Transverse colon (tissue), 4 donors: ENCODE measurements at regions of chr2 and their contacts with region 1.

Region 1: GRCh38 chr2:109128048-109128465 is 948 bp upstream of the SH3RF3 start:
- DNase-seq: peak; percentile 67
- H3K4me3 ChIP-seq: peak overlapping the region; percentile 51 to 66 (median 58)
- H3K27ac ChIP-seq: peak overlapping the region; percentile 75 to 86 (median 78)
- H3K4me1 ChIP-seq: peaks cover 0 to 19% (median 9%) of the 10 kb centered on the region in 4 donors
- H3K27me3 ChIP-seq: peaks cover 26% of the 10 kb centered on the region
- CTCF ChIP-seq: peak; percentile 79 to 88 (median 81)
- EP300 ChIP-seq: no peak
- POLR2A ChIP-seq: peak; percentile 18

Region 2: GRCh38 chr2:109510136-109511028 is 382.3 kb after region 1 on chr2:
- in situ Hi-C with region 1: loop called in 3 of 4 experiments (anchors 10 kb)
- intact Hi-C with region 1: loop called (anchors 2 kb)
- DNase-seq: peak; percentile 84
- H3K4me3 ChIP-seq: no peak overlapping the region
- H3K27ac ChIP-seq: no peak overlapping the region
- H3K4me1 ChIP-seq: peaks cover 6 to 14% (median 8%) of the 10 kb centered on the region in 4 donors
- H3K27me3 ChIP-seq: no peaks in the 10 kb centered on the region
- CTCF ChIP-seq: peak; percentile 89 to 95 (median 94)
- EP300 ChIP-seq: no peak
- POLR2A ChIP-seq: no peak

Region 3: GRCh38 chr2:110713513-110714362 is 1585.7 kb after region 1 on chr2:
- in situ Hi-C with region 1: no loop called
- intact Hi-C with region 1: no loop called
- DNase-seq: no peak
- H3K4me3 ChIP-seq: no peak overlapping the region
- H3K27ac ChIP-seq: no peak overlapping the region
- H3K4me1 ChIP-seq: peaks cover 0 to 17% (median 3%) of the 10 kb centered on the region in 4 donors
- H3K27me3 ChIP-seq: peaks cover 7% of the 10 kb centered on the region
- CTCF ChIP-seq: no peak
- EP300 ChIP-seq: no peak
- POLR2A ChIP-seq: no peak